PC-9 (cell line): ENCODE measurements at regions of chr15 and their contacts with region 1.

Region 1: GRCh38 chr15:81274931-81275707 is 48.8 kb downstream of the STARD5 start:
- DNase-seq: peak in 1 of 2 experiments; percentile 56
- H3K4me3 ChIP-seq: no peak overlapping the region
- H3K27ac ChIP-seq: no peak overlapping the region
- H3K4me1 ChIP-seq: no peaks in the 10 kb centered on the region
- H3K27me3 ChIP-seq: peaks cover 35% of the 10 kb centered on the region
- CTCF ChIP-seq: peak; percentile 81

Region 2: GRCh38 chr15:81336568-81336967 is 61.4 kb after region 1 on chr15:
- CTCF ChIA-PET with region 1: no interaction called
- POLR2A ChIA-PET with region 1: no interaction called
- intact Hi-C with region 1: loop called (anchors 1 kb)
- DNase-seq: no peak
- H3K4me3 ChIP-seq: no peak overlapping the region
- H3K27ac ChIP-seq: no peak overlapping the region
- H3K4me1 ChIP-seq: no peaks in the 10 kb centered on the region
- H3K27me3 ChIP-seq: peaks cover 44% of the 10 kb centered on the region
- CTCF ChIP-seq: no peak; the same call in 1 of the 2 replicates

Region 3: GRCh38 chr15:81400640-81401236 is 125.6 kb after region 1 on chr15:
- CTCF ChIA-PET with region 1: no interaction called
- POLR2A ChIA-PET with region 1: no interaction called
- intact Hi-C with region 1: loop called (anchors 1 kb)
- DNase-seq: no peak
- H3K4me3 ChIP-seq: no peak overlapping the region
- H3K27ac ChIP-seq: no peak overlapping the region
- H3K4me1 ChIP-seq: no peaks in the 10 kb centered on the region
- H3K27me3 ChIP-seq: peaks cover 34% of the 10 kb centered on the region; the same call in 1 of the 2 replicates
- CTCF ChIP-seq: peak; percentile 74

Region 4: GRCh38 chr15:81480645-81481053 is 205.5 kb after region 1 on chr15:
- CTCF ChIA-PET with region 1: no interaction called
- POLR2A ChIA-PET with region 1: no interaction called
- intact Hi-C with region 1: loop called (anchors 5 kb)
- DNase-seq: peak in 1 of 2 experiments; percentile 2
- H3K4me3 ChIP-seq: no peak overlapping the region
- H3K27ac ChIP-seq: no peak overlapping the region
- H3K4me1 ChIP-seq: no peaks in the 10 kb centered on the region
- H3K27me3 ChIP-seq: peaks cover 19% of the 10 kb centered on the region
- CTCF ChIP-seq: peak; percentile 92